PC-3 (cell line): ENCODE measurements at regions of chr15 and their contacts with region 1.

Region 1: DNA sequence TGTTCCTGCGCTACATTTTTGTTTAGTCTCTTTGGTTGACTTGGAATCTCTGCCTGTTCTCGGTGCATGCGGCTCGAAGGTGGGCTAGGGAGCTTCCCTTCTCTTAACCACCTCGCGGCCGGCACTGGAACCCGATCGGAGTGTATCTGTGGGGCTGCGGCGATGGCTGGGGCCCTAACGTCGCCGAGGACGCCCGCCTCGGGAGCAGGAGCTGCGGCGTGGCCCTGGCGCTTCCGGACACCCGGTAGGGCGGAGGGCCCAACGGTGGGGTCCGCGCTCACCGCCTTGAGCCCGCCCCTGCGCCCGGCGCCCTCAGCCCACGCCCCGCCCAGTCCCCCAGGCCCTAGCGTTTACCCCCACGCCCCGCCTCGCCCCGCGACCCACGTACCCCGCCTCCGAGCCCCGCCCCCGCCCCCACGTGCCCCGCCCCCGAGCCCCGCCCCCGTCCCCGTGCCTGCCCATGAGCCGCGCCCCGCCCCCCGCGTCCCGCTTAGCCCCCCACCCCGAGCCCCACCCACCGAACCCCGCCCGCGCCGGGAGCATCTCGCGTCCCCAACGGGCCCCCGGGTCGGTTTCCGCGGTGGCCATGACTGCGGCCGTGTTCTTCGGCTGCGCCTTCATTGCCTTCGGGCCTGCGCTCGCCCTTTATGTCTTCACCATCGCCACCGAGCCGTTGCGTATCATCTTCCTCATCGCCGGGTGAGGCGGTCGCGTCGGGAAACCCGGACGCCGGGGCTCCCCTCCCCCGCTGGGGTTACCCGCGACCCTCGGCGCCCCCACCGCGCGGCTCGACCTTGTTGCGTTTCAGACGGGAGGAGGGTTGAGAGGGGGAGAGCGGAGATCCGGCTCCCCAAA is at the start of gene APH1B:
- DNase-seq: peak; percentile 56
- ATAC-seq: peak; percentile 88
- H3K4me3 ChIP-seq: peak within 1 kb of the TSS; percentile 94
- H3K27ac ChIP-seq: 0 out of 2 replicates have a peak within 1 kb of the TSS, but pooled peaks have one; percentile 16
- H3K4me1 ChIP-seq: no peaks in the 10 kb centered on the region
- H3K27me3 ChIP-seq: no peaks in the 10 kb centered on the region
- CTCF ChIP-seq: no peak
- total RNA-seq, gene APH1B: 2.6 and 2.8 TPM in 2 replicates

Region 2: DNA sequence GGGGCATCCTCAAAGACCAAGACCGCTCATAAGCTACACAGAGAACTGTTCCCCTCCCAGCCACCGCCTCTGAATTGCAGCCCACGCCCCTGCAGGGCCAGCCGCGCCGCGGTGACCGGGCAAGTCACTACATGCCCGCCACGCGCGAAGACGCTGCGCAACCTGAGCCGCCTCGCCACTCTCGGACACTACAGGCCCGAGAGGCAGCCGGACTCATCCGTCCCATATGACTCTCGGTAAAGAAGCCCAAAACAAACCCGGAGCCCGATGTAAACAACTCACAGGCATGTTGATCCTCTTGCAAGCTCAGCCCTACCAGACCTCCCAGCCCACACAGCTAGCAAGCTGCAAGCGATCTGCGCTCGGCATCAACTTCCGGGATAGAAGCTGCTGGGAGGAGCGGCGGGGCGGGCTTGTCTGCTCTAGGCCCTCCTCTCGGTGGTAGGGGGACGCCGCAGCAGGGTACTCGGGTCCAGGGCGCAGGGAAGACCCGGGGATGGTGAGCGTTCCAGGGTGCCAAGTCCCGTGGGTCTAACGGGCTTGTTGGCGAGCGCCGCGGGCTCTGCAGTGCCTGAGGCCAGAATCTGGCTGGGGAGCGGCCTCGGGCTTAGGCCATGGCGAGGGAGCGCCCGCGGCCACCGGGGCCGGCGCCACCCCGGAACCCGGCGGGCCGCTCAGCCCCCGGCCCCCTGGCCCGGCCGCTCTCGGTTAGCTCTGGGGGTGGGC is 120.0 kb before region 1 on chr15 and contains the start of gene RPS27L:
- CTCF ChIA-PET with region 1: interaction called, 4 read pairs
- POLR2A ChIA-PET with region 1: no interaction called
- intact Hi-C with region 1: loop called (anchors 2 kb)
- DNase-seq: peak; percentile 82
- ATAC-seq: peak; percentile 91
- H3K4me3 ChIP-seq: peak within 1 kb of the TSS; percentile 84
- H3K27ac ChIP-seq: peak within 1 kb of the TSS; percentile 51
- H3K4me1 ChIP-seq: peaks cover 13% of the 10 kb centered on the region
- H3K27me3 ChIP-seq: no peaks in the 10 kb centered on the region
- CTCF ChIP-seq: no peak
- total RNA-seq, gene RPS27L: 33.9 and 48.5 TPM in 2 replicates

Region 3: GRCh38 chr15:63172376-63173109 is 104.7 kb before region 1 on chr15:
- CTCF ChIA-PET with region 1: no interaction called
- POLR2A ChIA-PET with region 1: no interaction called
- intact Hi-C with region 1: no loop called
- DNase-seq: no peak
- ATAC-seq: no peak
- H3K4me3 ChIP-seq: no peak overlapping the region
- H3K27ac ChIP-seq: no peak overlapping the region
- H3K4me1 ChIP-seq: peaks cover 8% of the 10 kb centered on the region
- H3K27me3 ChIP-seq: no peaks in the 10 kb centered on the region
- CTCF ChIP-seq: no peak